ENCODE measurements at regions of chr3 and their contacts with region 1.

Region 1: GRCh38 chr3:9396700-9397521 is 504 bp upstream of the SETD5 start:
- DNase-seq: peak; percentile 98
- H3K4me3 Mint-ChIP-seq: peak overlapping the region; percentile 94
- H3K27ac Mint-ChIP-seq: peak overlapping the region; percentile 98
- H3K4me1 Mint-ChIP-seq: peaks cover 65% of the 10 kb centered on the region
- H3K27me3 Mint-ChIP-seq: no peaks in the 10 kb centered on the region

Region 2: DNA sequence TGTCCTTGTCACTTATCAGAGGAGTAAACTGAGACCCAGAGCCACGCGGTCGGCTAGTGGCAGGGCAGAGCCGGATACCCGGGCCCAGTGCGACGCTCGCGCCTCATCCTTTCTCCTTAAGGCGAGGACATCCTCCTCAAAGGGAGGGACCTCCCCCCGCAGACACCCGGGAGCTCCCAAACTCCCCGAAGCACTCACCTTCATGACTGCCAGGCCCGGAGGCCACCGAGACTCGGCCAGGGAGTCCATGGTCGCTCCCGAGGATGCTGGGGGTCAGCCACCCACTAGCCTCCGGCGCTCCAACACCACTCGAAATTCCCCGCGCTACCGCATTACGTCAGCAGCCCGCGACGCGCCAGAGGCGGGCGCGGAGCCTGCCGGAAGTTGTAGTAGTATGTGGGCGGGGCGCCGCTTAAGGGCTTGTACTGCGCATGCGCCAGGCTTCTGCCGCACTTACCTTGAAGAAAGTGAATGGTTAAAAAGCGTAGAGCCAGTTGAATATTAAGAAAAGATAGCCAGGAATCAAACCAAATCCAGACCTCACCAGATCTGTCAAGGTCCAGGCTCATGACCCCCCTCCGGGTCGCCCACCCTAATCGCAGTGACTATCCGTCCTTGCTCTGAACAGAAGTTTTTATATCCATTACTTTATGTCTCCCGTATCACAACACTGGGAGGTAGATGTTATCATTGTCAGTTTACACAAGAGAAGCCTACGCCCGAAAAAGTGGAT is 433.6 kb before region 1 on chr3 and contains the start of gene RAD18:
- intact Hi-C with region 1: loop called (anchors 1 kb)
- DNase-seq: peak; percentile 91
- H3K4me3 Mint-ChIP-seq: peak within 1 kb of the TSS; percentile 98
- H3K27ac Mint-ChIP-seq: peak within 1 kb of the TSS; percentile 97
- H3K4me1 Mint-ChIP-seq: peaks cover 62% of the 10 kb centered on the region
- H3K27me3 Mint-ChIP-seq: peaks cover 7% of the 10 kb centered on the region
- total RNA-seq, gene RAD18: 52.8 and 54.2 TPM in 2 replicates

Region 3: DNA sequence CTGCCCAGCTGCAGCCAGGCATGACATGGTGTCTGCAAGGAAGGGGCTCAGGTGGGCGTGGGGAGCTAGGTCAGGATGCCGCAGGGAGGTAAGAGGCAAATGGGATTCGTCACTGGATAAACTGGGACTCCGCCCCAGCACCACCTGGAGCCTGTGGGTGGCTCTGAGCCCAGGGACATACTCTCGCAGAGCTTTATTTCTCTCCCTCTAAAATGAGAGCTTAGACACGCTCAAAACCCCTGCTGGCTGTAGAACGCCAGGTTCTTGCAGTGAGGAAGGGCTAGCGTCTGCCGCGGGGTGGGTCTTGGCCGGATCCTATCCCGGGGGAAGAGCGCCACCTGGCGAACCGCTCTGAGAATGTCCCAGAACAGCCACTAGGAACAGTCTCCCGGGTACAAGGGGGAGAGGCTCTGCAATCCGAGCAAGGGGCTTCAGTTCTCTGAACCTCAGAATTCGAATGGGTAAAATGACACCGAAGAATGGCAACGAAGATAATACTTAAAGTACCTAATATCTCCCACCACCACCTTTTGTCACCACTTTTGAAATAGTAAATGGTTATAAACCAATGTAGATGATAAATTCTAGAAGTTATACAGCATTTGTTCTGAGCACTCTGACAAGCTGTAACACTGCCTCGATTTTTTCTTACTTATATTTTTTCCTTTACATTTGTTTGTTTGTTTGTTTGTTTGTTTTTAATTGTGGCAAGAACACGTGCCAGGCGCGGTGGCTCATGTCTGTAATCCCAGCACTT is 94.3 kb before region 1 on chr3:
- intact Hi-C with region 1: no loop called
- DNase-seq: peak; percentile 63
- H3K4me3 Mint-ChIP-seq: no peak overlapping the region
- H3K27ac Mint-ChIP-seq: no peak overlapping the region
- H3K4me1 Mint-ChIP-seq: peaks cover 5% of the 10 kb centered on the region
- H3K27me3 Mint-ChIP-seq: peaks cover 3% of the 10 kb centered on the region

Region 4: GRCh38 chr3:9408546-9408945 is 11.6 kb after region 1 on chr3:
- intact Hi-C with region 1: loop called (anchors 1 kb)
- DNase-seq: no peak
- H3K4me3 Mint-ChIP-seq: no peak overlapping the region
- H3K27ac Mint-ChIP-seq: no peak overlapping the region
- H3K4me1 Mint-ChIP-seq: peaks cover 49% of the 10 kb centered on the region
- H3K27me3 Mint-ChIP-seq: no peaks in the 10 kb centered on the region

Region 5: DNA sequence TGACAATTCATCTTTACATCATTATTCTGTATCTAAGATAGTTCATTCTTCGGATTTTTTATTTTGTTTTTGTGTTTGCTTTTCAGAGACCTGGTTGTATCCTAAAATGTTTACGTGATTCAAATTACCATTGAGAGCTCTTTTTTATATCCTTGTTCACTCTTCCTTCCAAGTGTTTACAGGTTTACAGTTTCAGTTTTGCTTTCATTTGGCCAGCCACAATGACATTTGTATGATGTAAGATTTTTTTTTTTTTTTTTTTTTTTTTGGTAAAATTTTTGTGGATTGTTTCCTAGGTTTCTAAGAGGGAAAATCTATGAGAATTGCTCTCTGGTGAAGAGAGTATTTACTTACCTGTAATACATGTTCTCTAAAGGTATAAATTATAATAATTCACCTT is 55.5 kb after region 1 on chr3:
- intact Hi-C with region 1: loop called (anchors 1 kb)
- DNase-seq: no peak
- H3K4me3 Mint-ChIP-seq: peak overlapping the region; percentile 69
- H3K27ac Mint-ChIP-seq: peak overlapping the region; percentile 93
- H3K4me1 Mint-ChIP-seq: peaks cover 47% of the 10 kb centered on the region
- H3K27me3 Mint-ChIP-seq: no peaks in the 10 kb centered on the region

Region 6: GRCh38 chr3:9749645-9750555 is 353.0 kb after region 1 on chr3 and contains the start of gene OGG1:
- intact Hi-C with region 1: loop called (anchors 1 kb)
- DNase-seq: peak; percentile 96
- H3K4me3 Mint-ChIP-seq: peak within 1 kb of the TSS; percentile 96
- H3K27ac Mint-ChIP-seq: peak within 1 kb of the TSS; percentile 95
- H3K4me1 Mint-ChIP-seq: peaks cover 61% of the 10 kb centered on the region
- H3K27me3 Mint-ChIP-seq: no peaks in the 10 kb centered on the region
- total RNA-seq, gene OGG1: 40.2 and 40.6 TPM in 2 replicates

Region 7: DNA sequence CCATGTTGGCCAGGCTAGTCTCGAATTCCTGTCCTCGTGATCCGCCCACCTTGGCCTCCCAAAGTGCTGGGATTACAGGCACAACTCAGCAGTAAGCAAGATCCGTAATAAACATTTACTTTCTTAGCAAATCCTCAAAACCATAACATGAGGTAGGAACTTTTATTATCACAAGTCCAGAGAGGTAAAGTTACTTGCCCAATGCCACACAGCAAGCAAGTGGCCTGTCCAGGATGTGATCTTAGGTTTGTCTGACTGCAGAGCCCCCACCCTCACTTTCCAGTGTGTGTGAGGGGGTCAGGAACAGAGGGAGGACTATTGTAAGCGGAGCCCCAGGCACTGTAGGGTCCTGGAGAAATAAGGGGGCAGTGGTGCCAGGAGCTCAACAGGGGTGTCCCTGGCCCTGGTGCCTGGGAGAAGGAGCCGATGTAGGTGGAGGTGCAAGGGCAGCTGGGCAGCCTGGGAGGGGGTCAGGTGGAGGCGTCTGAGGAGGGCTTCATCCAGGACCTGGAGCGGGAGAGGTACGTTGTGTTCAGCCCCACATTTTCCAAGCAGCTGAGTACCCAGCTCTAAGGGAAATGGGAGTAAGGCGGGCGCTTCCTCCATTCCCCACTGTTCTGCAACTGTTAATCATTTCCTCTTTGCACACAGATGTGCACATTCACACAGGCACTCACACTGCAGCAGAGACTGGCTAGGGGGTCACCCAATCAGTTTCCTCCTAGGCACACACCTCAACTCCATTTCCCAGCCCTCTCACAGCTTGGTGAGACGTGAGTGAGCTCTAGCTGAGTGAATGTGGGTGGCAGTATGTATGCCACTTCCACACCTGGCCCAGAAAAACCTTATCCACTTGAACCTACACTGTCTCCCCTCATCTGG is 441.0 kb after region 1 on chr3:
- intact Hi-C with region 1: no loop called
- DNase-seq: no peak
- H3K4me3 Mint-ChIP-seq: no peak overlapping the region
- H3K27ac Mint-ChIP-seq: no peak overlapping the region
- H3K4me1 Mint-ChIP-seq: peaks cover 10% of the 10 kb centered on the region
- H3K27me3 Mint-ChIP-seq: no peaks in the 10 kb centered on the region

Region 8: GRCh38 chr3:10142707-10143566 is 746.0 kb after region 1 on chr3:
- intact Hi-C with region 1: loop called (anchors 5 kb)
- DNase-seq: no peak
- H3K4me3 Mint-ChIP-seq: peak overlapping the region; percentile 90
- H3K27ac Mint-ChIP-seq: peak overlapping the region; percentile 85
- H3K4me1 Mint-ChIP-seq: peaks cover 25% of the 10 kb centered on the region
- H3K27me3 Mint-ChIP-seq: no peaks in the 10 kb centered on the region

Region 9: GRCh38 chr3:10594921-10595320 is 1198.0 kb after region 1 on chr3:
- intact Hi-C with region 1: loop called (anchors 5 kb)
- DNase-seq: peak; percentile 36
- H3K4me3 Mint-ChIP-seq: no peak overlapping the region
- H3K27ac Mint-ChIP-seq: no peak overlapping the region
- H3K4me1 Mint-ChIP-seq: no peaks in the 10 kb centered on the region
- H3K27me3 Mint-ChIP-seq: peaks cover 3% of the 10 kb centered on the region

Measured in activated T-helper 1 cell treated with anti-CD3 and anti-CD28 coated beads, Interleukin-12 subunit alpha, Interleukin-12 subunit beta, Interleukin-2, Interleukin-4 antibody, amounts not matched to agents 30 ng/mL and 10 ng/mL and 1 ng/mL, durations not matched to agents 14 hours and 24 hours and 36 hours (primary cell).